Pancreas (tissue), 10 donors: ENCODE measurements at regions of chr19 and their contacts with region 1.

Region 1: DNA sequence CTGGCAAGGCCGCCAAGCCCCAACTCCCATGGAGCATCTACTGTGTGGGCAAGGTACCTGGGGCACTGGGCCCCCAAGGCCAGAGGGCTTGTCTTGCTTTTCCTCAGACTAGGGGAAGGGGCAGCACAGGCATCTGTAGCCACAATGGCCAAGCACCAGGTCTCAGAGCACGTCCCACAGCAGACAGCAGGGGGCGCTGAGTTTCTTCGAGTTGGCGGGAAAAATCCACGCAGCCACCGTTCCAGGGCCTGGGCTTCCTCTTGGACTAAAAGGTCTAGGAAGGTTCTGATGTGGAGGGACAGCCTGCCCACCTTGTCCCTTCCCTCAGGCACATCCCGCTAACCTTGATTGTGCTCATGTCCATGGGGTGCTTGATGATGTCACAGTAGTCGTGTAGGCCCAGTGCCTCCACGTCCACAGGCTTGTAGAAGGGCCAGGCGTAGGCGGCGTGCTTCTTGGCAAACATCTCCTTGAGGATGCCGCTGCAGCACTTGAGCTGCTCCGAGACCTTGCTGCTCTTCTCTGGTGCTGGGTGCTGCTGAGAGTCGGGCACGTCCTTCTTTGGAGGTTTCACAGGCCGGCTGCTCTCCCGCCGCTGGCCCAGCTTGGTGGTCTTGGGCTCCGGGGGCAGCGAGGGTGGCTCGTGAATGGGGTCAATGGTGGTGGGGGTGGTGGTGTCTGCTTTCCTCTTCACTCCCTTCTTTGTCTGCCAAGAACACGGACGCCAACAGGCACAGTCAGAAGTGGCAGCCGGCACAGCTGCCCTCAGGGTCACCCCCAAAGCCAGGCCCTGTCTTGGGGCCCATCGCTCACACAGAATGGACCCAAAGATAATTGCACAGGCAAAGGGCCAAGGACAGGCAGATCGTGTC is 32.0 kb upstream of the EPHX3 start:
- DNase-seq: peak; percentile 66 to 93 (median 82)
- ATAC-seq: peak; percentile 21 to 55 (median 47)
- H3K4me3 ChIP-seq: no peak overlapping the region
- H3K27ac ChIP-seq: peak overlapping the region; percentile 42 to 88 (median 68)
- H3K4me1 ChIP-seq: peaks cover 46 to 68% (median 59%) of the 10 kb centered on the region in 3 donors
- H3K27me3 ChIP-seq: no peaks in the 10 kb centered on the region
- CTCF ChIP-seq: peak; percentile 51 to 71 (median 64)

Region 2: GRCh38 chr19:15318241-15318691 is 54.0 kb after region 1 on chr19:
- intact Hi-C with region 1: loop called in 1 of 3 experiments (anchors 10 kb)
- DNase-seq: no peak
- ATAC-seq: peak in 3 of 4 donors; percentile 3 to 47 (median 39)
- H3K4me3 ChIP-seq: no peak overlapping the region
- H3K27ac ChIP-seq: peak overlapping the region in 1 of 4 donors; percentile 4
- H3K4me1 ChIP-seq: peaks cover 36 to 62% (median 55%) of the 10 kb centered on the region in 3 donors
- H3K27me3 ChIP-seq: no peaks in the 10 kb centered on the region
- CTCF ChIP-seq: no peak

Region 3: GRCh38 chr19:15555759-15556633 is 291.7 kb after region 1 on chr19:
- intact Hi-C with region 1: loop called in 2 of 3 experiments (anchors 10 kb)
- DNase-seq: peak; percentile 69 to 91 (median 82)
- ATAC-seq: peak; percentile 91 to 97 (median 94)
- H3K4me3 ChIP-seq: peak overlapping the region in 1 of 4 donors; percentile 23
- H3K27ac ChIP-seq: peak overlapping the region in 1 of 4 donors; percentile 31
- H3K4me1 ChIP-seq: peaks cover 0 to 8% (median 5%) of the 10 kb centered on the region in 3 donors
- H3K27me3 ChIP-seq: no peaks in the 10 kb centered on the region
- CTCF ChIP-seq: peak; percentile 35 to 66 (median 52)

Region 4: DNA sequence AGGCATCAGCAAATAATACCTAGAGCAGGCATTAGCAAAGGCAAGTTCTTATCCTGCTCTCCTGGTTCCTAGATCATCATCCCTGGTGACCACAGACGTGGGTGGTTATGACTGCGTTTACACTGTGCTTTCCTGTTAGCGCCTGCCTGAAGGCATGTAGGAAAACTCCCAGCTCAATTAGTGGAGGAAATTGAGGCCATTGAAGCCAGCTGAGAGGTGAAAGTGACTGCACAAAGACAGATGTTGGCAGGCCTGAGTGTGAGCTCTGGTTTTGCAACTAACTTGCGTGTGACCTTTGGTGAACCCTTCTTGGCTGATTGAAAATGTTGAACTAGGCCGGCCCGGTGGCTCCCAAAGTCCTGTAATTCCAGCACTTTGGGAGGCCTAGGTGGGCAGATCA is 1437.8 kb after region 1 on chr19:
- intact Hi-C with region 1: no loop called
- DNase-seq: no peak
- ATAC-seq: no peak
- H3K4me3 ChIP-seq: no peak overlapping the region
- H3K27ac ChIP-seq: no peak overlapping the region
- H3K4me1 ChIP-seq: no peaks in the 10 kb centered on the region
- H3K27me3 ChIP-seq: no peaks in the 10 kb centered on the region
- CTCF ChIP-seq: no peak